ENCODE measurements at regions of chr16 and their contacts with region 1.

Region 1: GRCh38 chr16:68406451-68407152 is 41.7 kb downstream of the SMPD3 start:
- DNase-seq: no peak
- ATAC-seq: no peak
- H3K4me3 ChIP-seq: no peak overlapping the region
- H3K4me3 Mint-ChIP-seq: no peak overlapping the region
- H3K27ac ChIP-seq: no peak overlapping the region
- H3K27ac Mint-ChIP-seq: no peak overlapping the region
- H3K4me1 ChIP-seq: peaks cover 14% of the 10 kb centered on the region
- H3K4me1 Mint-ChIP-seq: peaks cover 15% of the 10 kb centered on the region
- H3K27me3 ChIP-seq: no peaks in the 10 kb centered on the region
- H3K27me3 Mint-ChIP-seq: no peaks in the 10 kb centered on the region
- CTCF ChIP-seq: no peak

Region 2: GRCh38 chr16:68367030-68367429 is 39.6 kb before region 1 on chr16:
- CTCF ChIA-PET with region 1: no interaction called
- POLR2A ChIA-PET with region 1: no interaction called
- intact Hi-C with region 1: loop called in 1 of 2 experiments (anchors 5 kb)
- DNase-seq: peak in 9 of 14 experiments; percentile 19 to 69 (median 35)
- ATAC-seq: peak; percentile 38
- H3K4me3 ChIP-seq: no peak overlapping the region
- H3K4me3 Mint-ChIP-seq: no peak overlapping the region
- H3K27ac ChIP-seq: no peak overlapping the region
- H3K27ac Mint-ChIP-seq: no peak overlapping the region
- H3K4me1 ChIP-seq: peaks cover 63% of the 10 kb centered on the region
- H3K4me1 Mint-ChIP-seq: peaks cover 58% of the 10 kb centered on the region
- H3K27me3 ChIP-seq: peaks cover 0 to 4% of the 10 kb centered on the region in 2 experiments
- H3K27me3 Mint-ChIP-seq: no peaks in the 10 kb centered on the region
- CTCF ChIP-seq: peak; percentile 50

Region 3: GRCh38 chr16:68426351-68426660 is 19.7 kb after region 1 on chr16:
- CTCF ChIA-PET with region 1: no interaction called
- POLR2A ChIA-PET with region 1: no interaction called
- intact Hi-C with region 1: no loop called
- DNase-seq: no peak
- ATAC-seq: no peak
- H3K4me3 ChIP-seq: no peak overlapping the region
- H3K4me3 Mint-ChIP-seq: no peak overlapping the region
- H3K27ac ChIP-seq: no peak overlapping the region
- H3K27ac Mint-ChIP-seq: peak overlapping the region; percentile 77
- H3K4me1 ChIP-seq: peaks cover 31% of the 10 kb centered on the region
- H3K4me1 Mint-ChIP-seq: peaks cover 44% of the 10 kb centered on the region
- H3K27me3 ChIP-seq: no peaks in the 10 kb centered on the region
- H3K27me3 Mint-ChIP-seq: no peaks in the 10 kb centered on the region
- CTCF ChIP-seq: no peak

Region 4: GRCh38 chr16:68436581-68436980 is 30.0 kb after region 1 on chr16:
- CTCF ChIA-PET with region 1: no interaction called
- POLR2A ChIA-PET with region 1: no interaction called
- intact Hi-C with region 1: loop called in 1 of 2 experiments (anchors 5 kb)
- DNase-seq: no peak
- ATAC-seq: no peak
- H3K4me3 ChIP-seq: no peak overlapping the region
- H3K4me3 Mint-ChIP-seq: no peak overlapping the region
- H3K27ac ChIP-seq: no peak overlapping the region
- H3K27ac Mint-ChIP-seq: no peak overlapping the region
- H3K4me1 ChIP-seq: peaks cover 9% of the 10 kb centered on the region
- H3K4me1 Mint-ChIP-seq: peaks cover 28% of the 10 kb centered on the region
- H3K27me3 ChIP-seq: peaks cover 0 to under 1% of the 10 kb centered on the region in 2 experiments
- H3K27me3 Mint-ChIP-seq: peaks cover 11% of the 10 kb centered on the region
- CTCF ChIP-seq: no peak

Region 5: DNA sequence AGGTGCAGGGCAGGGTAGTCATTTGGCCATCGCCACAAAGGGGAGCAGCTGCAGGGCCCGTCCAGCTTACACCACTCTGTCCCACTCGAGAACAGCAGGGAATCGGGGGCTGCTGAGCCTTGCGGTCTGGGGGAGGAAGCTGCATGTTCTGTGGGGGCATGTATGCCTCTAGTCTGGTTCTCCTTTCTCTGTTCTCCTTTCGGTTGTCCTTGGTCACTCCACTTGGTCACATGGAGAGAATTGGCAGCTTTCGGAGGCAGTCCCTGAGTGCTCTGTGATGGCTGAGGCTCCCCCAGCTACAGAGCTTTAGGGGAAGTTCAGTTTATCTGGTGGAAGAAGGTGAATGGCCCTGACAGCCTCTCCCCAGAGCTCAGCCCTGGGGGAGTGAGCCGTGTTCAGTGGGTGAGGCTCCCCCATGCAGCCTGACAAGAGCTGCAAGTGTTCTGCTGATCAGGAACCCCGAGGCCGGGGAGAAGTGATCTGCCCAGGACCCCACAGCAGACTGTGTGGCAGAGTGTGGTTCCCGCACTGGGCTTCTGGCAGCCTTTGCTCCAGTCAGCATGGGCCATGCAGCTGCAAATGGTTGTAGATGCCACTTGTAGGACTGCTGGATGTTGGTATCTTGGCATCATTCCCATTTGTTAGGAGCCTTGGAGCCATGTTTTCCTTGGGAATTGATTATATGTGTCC is 64.0 kb after region 1 on chr16:
- CTCF ChIA-PET with region 1: no interaction called
- POLR2A ChIA-PET with region 1: no interaction called
- intact Hi-C with region 1: loop called in 1 of 2 experiments (anchors 5 kb)
- DNase-seq: peak in 4 of 14 experiments; percentile 38 to 60 (median 50)
- ATAC-seq: peak; percentile 54
- H3K4me3 ChIP-seq: peak overlapping the region; percentile 37
- H3K4me3 Mint-ChIP-seq: peak overlapping the region; percentile 86
- H3K27ac ChIP-seq: peak overlapping the region; percentile 34 to 43
- H3K27ac Mint-ChIP-seq: peak overlapping the region; percentile 66
- H3K4me1 ChIP-seq: peaks cover 37% of the 10 kb centered on the region
- H3K4me1 Mint-ChIP-seq: peaks cover 48% of the 10 kb centered on the region
- H3K27me3 ChIP-seq: no peaks in the 10 kb centered on the region
- H3K27me3 Mint-ChIP-seq: no peaks in the 10 kb centered on the region
- CTCF ChIP-seq: no peak

Region 6: DNA sequence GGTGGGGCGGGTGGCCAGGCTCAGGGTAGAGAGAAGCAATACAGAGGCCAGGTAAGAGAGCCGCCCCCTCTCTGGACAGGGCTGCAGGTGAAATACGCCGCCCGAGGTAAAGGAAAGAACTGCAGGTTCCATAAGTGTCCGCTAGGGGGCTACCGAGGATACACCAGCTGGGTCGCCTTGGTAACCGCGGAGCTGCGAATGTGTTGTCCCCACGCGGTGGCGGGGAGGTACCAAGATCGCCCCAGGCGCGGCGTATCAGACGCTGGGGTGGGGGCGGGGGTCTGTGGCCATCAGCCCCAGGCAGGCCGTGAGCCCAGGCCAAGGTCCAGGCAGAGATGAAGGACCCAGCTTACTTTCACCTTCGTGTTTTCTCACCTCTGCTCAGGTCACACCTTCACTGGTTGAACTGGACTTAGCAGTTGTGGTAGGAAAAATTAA is 114.1 kb after region 1 on chr16:
- CTCF ChIA-PET with region 1: no interaction called
- POLR2A ChIA-PET with region 1: no interaction called
- intact Hi-C with region 1: loop called in 1 of 2 experiments (anchors 5 kb)
- DNase-seq: peak; percentile 77 to 95 (median 83)
- ATAC-seq: peak; percentile 98
- H3K4me3 ChIP-seq: peak overlapping the region; percentile 26
- H3K4me3 Mint-ChIP-seq: peak overlapping the region; percentile 43
- H3K27ac ChIP-seq: no peak overlapping the region
- H3K27ac Mint-ChIP-seq: peak overlapping the region; percentile 71
- H3K4me1 ChIP-seq: peaks cover 10% of the 10 kb centered on the region
- H3K4me1 Mint-ChIP-seq: peaks cover 7% of the 10 kb centered on the region
- H3K27me3 ChIP-seq: no peaks in the 10 kb centered on the region
- H3K27me3 Mint-ChIP-seq: peaks cover 5% of the 10 kb centered on the region
- CTCF ChIP-seq: peak; percentile 99